ENCODE measurements at regions of chr11 and their contacts with region 1.

Region 1: DNA sequence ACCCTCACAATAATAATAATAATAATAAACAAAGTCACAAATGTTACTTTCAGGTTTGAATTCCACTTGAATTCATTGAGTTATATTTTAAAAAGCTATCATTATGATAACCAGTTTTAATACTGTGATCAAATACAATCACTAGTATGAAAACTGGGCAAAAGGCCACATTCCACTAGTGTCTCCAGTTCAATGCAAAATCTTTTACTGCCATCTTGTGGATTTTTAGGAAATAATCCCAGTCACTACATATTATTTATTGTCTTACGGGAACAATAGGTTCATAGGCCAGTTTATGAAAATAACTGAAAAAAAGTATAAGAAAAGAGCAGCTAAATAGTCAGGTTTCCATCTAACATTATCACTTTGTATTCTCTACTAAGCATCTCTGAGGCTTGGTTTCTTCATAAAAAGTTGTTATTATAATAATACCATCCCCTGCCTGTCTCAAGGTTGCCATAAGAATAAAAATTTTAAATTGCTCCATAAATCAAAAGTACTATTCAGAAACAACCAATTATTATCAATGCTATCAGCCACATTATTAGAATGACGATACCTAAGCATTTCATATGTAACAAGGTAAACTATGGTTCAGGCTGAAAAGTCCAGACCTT is 533.9 kb upstream of the CCDC90B start:
- DNase-seq: peak; percentile 44 to 65 (median 58)
- H3K4me3 ChIP-seq: no peak overlapping the region
- H3K27ac ChIP-seq: no peak overlapping the region
- H3K4me1 ChIP-seq: no peaks in the 10 kb centered on the region
- H3K27me3 ChIP-seq: peaks cover 0 to 2% (median 0%) of the 10 kb centered on the region in 5 experiments

Region 2: GRCh38 chr11:83691451-83691950 is 128.5 kb before region 1 on chr11:
- CTCF ChIA-PET with region 1: no interaction called
- POLR2A ChIA-PET with region 1: no interaction called
- DNase-seq: no peak
- H3K4me3 ChIP-seq: no peak overlapping the region
- H3K27ac ChIP-seq: no peak overlapping the region
- H3K4me1 ChIP-seq: peaks cover 0 to 2% (median 0%) of the 10 kb centered on the region in 4 experiments
- H3K27me3 ChIP-seq: no peaks in the 10 kb centered on the region

Region 3: GRCh38 chr11:83836883-83837654 is 17.0 kb after region 1 on chr11:
- CTCF ChIA-PET with region 1: interaction called, 17 read pairs
- POLR2A ChIA-PET with region 1: no interaction called
- DNase-seq: peak; percentile 39 to 67 (median 61)
- H3K4me3 ChIP-seq: no peak overlapping the region
- H3K27ac ChIP-seq: no peak overlapping the region
- H3K4me1 ChIP-seq: no peaks in the 10 kb centered on the region
- H3K27me3 ChIP-seq: peaks cover 0 to 7% (median 0%) of the 10 kb centered on the region in 5 experiments

Measured in common myeloid progenitor, CD34-positive (primary cell).